HCT116 (cell line): ENCODE measurements at regions of chr10 and their contacts with region 1.

Region 1: DNA sequence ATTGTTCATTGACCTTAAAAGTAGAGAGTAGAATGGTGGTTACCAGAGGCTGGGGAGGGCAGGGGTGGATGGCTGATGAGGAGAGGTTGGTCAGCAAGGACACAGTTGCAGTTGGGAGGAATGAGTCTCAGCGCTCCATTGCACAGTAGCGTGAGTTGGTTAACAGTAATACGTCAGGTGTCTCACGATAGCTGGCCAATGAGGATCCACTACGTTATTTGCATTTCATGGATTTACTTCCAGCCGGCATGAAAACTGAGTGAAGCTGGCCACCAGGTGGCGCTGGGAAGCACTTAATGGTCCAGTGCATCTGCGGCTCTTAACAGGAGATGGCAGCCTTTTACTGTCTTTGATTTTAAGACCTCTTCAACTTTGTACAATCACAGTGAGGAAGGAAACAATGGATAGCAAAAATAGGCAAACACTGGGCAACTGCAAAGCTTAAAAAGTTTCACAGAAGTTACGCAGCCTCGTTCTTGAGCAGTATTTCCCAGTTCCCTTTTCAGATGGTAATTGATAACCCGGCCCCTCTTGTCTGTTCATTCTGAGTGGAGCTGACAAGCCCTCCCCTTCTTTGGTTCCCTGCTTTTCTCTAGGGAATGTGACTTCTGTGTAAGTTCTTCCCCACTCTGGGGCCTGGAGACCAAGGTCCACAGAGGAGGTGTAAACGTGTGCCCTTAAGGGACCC is 23.7 kb downstream of the AKR1E2 start:
- DNase-seq: peak; percentile 88
- ATAC-seq: peak; percentile 96
- H3K4me3 ChIP-seq: no peak overlapping the region
- H3K27ac ChIP-seq: no peak overlapping the region
- H3K4me1 ChIP-seq: peaks cover 0 to 5% of the 10 kb centered on the region in 2 experiments; a peak in 1 of 4 replicates
- H3K27me3 ChIP-seq: no peaks in the 10 kb centered on the region
- CTCF ChIP-seq: peak; percentile 95 to 100 (median 100)
- POLR2A ChIP-seq: no peak
- RAD21 ChIP-seq: peak; percentile 96

Region 2: GRCh38 chr10:4981722-4982471 is 132.2 kb after region 1 on chr10:
- CTCF ChIA-PET with region 1: interaction called, 14 read pairs
- POLR2A ChIA-PET with region 1: no interaction called
- RAD21 ChIA-PET with region 1: no interaction called
- intact Hi-C with region 1: loop called (anchors 1 kb)
- DNase-seq: peak; percentile 26
- ATAC-seq: peak; percentile 80
- H3K4me3 ChIP-seq: no peak overlapping the region
- H3K27ac ChIP-seq: no peak overlapping the region
- H3K4me1 ChIP-seq: peaks cover 6 to 7% of the 10 kb centered on the region in 2 experiments; a peak in 2 of 4 replicates
- H3K27me3 ChIP-seq: no peaks in the 10 kb centered on the region
- CTCF ChIP-seq: peak; percentile 52 to 67 (median 57); a peak in 5 of 6 replicates
- POLR2A ChIP-seq: no peak
- RAD21 ChIP-seq: peak; percentile 47; the same call in 1 of the 2 replicates

Region 3: GRCh38 chr10:5094265-5095205 is 244.8 kb after region 1 on chr10 and contains the start of gene AKR1C3:
- CTCF ChIA-PET with region 1: interaction called, 10 read pairs
- POLR2A ChIA-PET with region 1: no interaction called
- RAD21 ChIA-PET with region 1: no interaction called
- intact Hi-C with region 1: loop called (anchors 1 kb)
- DNase-seq: peak; percentile 51
- ATAC-seq: peak; percentile 79
- H3K4me3 ChIP-seq: peak within 1 kb of the TSS; percentile 25 to 48
- H3K27ac ChIP-seq: no peak within 1 kb of the TSS
- H3K4me1 ChIP-seq: no peaks in the 10 kb centered on the region; a peak in 1 of 4 replicates
- H3K27me3 ChIP-seq: no peaks in the 10 kb centered on the region
- CTCF ChIP-seq: peak; percentile 56 to 78 (median 65)
- POLR2A ChIP-seq: no peak
- RAD21 ChIP-seq: peak; percentile 65
- total RNA-seq, gene AKR1C3: 3.0 TPM

Region 4: GRCh38 chr10:5283305-5284158 is 433.8 kb after region 1 on chr10:
- CTCF ChIA-PET with region 1: interaction called, 18 read pairs
- POLR2A ChIA-PET with region 1: no interaction called
- RAD21 ChIA-PET with region 1: interaction called in 1 of 2 experiments, 3 read pairs
- intact Hi-C with region 1: loop called (anchors 1 kb)
- DNase-seq: peak; percentile 55
- ATAC-seq: peak; percentile 97
- H3K4me3 ChIP-seq: no peak overlapping the region
- H3K27ac ChIP-seq: no peak overlapping the region
- H3K4me1 ChIP-seq: peaks cover 0 to 6% of the 10 kb centered on the region in 2 experiments; a peak in 1 of 4 replicates
- H3K27me3 ChIP-seq: no peaks in the 10 kb centered on the region
- CTCF ChIP-seq: peak; percentile 77 to 90 (median 80)
- POLR2A ChIP-seq: no peak
- RAD21 ChIP-seq: peak; percentile 79

Region 5: GRCh38 chr10:5385224-5385623 is 535.5 kb after region 1 on chr10:
- CTCF ChIA-PET with region 1: interaction called, 7 read pairs
- POLR2A ChIA-PET with region 1: no interaction called
- RAD21 ChIA-PET with region 1: no interaction called
- intact Hi-C with region 1: loop called (anchors 1 kb)
- DNase-seq: no peak
- ATAC-seq: no peak
- H3K4me3 ChIP-seq: no peak overlapping the region
- H3K27ac ChIP-seq: no peak overlapping the region
- H3K4me1 ChIP-seq: no peaks in the 10 kb centered on the region
- H3K27me3 ChIP-seq: no peaks in the 10 kb centered on the region
- CTCF ChIP-seq: no peak
- POLR2A ChIP-seq: no peak
- RAD21 ChIP-seq: no peak

Region 6: DNA sequence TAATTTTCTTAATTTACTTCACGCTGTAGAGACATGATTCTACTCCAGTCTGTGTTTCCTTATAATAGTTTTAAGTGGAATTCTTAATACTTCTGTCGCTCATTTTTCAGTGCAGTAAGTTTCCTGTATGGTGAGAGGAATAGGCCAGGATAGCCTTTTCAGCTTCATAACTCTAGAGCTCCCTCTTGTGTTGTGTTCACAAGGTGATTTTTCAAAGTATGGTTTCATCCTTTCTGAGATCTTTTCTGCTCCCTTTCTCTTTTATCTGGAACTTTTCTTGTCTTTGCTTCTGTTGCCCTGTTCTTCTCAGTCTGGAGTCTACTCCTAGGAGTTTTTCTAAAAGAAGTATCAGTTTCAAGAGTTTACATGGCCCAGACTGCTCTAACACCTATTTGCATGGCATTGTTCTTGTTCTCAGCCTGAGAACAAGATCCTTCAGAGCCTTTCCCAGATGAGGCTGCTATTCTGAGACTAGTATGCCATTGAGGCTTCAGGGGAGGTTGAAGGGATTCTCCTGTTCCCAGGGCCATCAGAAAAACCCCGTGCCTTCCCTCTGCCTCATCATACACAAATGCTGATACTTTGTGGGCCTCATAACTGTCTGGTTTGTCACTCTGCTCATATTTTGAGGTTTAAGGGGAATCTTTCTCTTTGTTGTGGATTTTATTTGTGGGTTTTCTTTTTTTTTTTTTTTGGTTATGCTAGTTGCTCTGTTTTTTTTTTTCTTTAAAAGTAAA is 584.5 kb after region 1 on chr10:
- CTCF ChIA-PET with region 1: interaction called, 28 read pairs
- POLR2A ChIA-PET with region 1: no interaction called
- RAD21 ChIA-PET with region 1: interaction called, 3 read pairs
- intact Hi-C with region 1: loop called (anchors 1 kb)
- DNase-seq: peak; percentile 37
- ATAC-seq: peak; percentile 83
- H3K4me3 ChIP-seq: no peak overlapping the region
- H3K27ac ChIP-seq: no peak overlapping the region
- H3K4me1 ChIP-seq: no peaks in the 10 kb centered on the region
- H3K27me3 ChIP-seq: no peaks in the 10 kb centered on the region
- CTCF ChIP-seq: peak; percentile 57 to 80 (median 69); a peak in 5 of 6 replicates
- POLR2A ChIP-seq: no peak
- RAD21 ChIP-seq: peak; percentile 74

Region 7: DNA sequence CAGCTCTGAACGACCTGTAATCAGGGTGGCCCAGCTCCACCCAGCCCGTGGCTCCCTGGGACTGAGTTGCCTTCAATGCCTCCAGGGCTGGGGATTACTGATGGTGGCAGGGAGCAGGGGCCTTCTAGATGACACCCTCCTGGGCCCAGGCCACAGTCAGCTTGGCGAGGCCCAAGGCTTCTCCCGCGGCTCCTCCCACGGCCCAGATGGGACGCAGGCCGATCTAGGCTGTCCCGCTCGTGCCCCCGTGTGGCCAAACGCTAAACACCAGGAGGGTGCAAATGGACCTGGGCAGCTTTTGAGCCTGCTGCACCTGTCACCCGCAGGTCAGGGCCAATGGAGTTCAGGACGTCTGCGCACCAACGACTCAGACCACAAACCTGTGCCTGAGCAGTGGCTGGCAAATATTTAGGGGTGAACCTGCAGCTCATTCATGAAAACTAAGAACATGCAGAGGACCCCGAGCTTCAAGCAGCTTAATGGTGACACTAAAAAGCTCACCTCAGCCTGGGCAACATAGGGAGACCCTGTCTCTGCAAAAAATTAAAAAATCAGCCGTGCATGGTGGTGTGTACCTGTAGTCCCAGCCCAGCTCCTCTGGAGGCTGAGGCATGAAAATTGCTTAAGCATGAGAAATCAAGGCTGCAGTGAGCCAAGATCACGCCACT is 773.5 kb after region 1 on chr10:
- CTCF ChIA-PET with region 1: interaction called, 12 read pairs
- POLR2A ChIA-PET with region 1: no interaction called
- RAD21 ChIA-PET with region 1: no interaction called
- intact Hi-C with region 1: loop called (anchors 1 kb)
- DNase-seq: peak; percentile 76
- ATAC-seq: peak; percentile 99
- H3K4me3 ChIP-seq: no peak overlapping the region
- H3K27ac ChIP-seq: no peak overlapping the region
- H3K4me1 ChIP-seq: peaks cover 0 to 6% of the 10 kb centered on the region in 2 experiments; a peak in 2 of 4 replicates
- H3K27me3 ChIP-seq: no peaks in the 10 kb centered on the region
- CTCF ChIP-seq: peak; percentile 89 to 94 (median 91)
- POLR2A ChIP-seq: no peak
- RAD21 ChIP-seq: peak; percentile 99

Region 8: GRCh38 chr10:5666008-5666829 is 816.5 kb after region 1 on chr10 and contains the start of gene ASB13:
- CTCF ChIA-PET with region 1: no interaction called
- POLR2A ChIA-PET with region 1: no interaction called
- RAD21 ChIA-PET with region 1: no interaction called
- intact Hi-C with region 1: no loop called
- DNase-seq: peak; percentile 28
- ATAC-seq: peak; percentile 94
- H3K4me3 ChIP-seq: peak within 1 kb of the TSS; percentile 80 to 93
- H3K27ac ChIP-seq: peak within 1 kb of the TSS; percentile 60
- H3K4me1 ChIP-seq: peaks cover 9 to 23% of the 10 kb centered on the region in 2 experiments; a peak in 3 of 4 replicates
- H3K27me3 ChIP-seq: no peaks in the 10 kb centered on the region
- CTCF ChIP-seq: no peak
- POLR2A ChIP-seq: peak; percentile 83
- RAD21 ChIP-seq: no peak
- total RNA-seq, gene ASB13: 25.9 TPM